ENCODE measurements at regions of chr7 and their contacts with region 1.

Region 1: GRCh38 chr7:112449902-112450806 is at the start of gene IFRD1:
- DNase-seq: peak; percentile 99
- H3K4me3 Mint-ChIP-seq: peak within 1 kb of the TSS; percentile 97
- H3K27ac Mint-ChIP-seq: peak within 1 kb of the TSS; percentile 97
- H3K4me1 Mint-ChIP-seq: peaks cover 26% of the 10 kb centered on the region
- H3K27me3 Mint-ChIP-seq: no peaks in the 10 kb centered on the region
- CTCF ChIP-seq: no peak
- total RNA-seq, gene IFRD1: 116 and 123 TPM in 2 replicates

Region 2: DNA sequence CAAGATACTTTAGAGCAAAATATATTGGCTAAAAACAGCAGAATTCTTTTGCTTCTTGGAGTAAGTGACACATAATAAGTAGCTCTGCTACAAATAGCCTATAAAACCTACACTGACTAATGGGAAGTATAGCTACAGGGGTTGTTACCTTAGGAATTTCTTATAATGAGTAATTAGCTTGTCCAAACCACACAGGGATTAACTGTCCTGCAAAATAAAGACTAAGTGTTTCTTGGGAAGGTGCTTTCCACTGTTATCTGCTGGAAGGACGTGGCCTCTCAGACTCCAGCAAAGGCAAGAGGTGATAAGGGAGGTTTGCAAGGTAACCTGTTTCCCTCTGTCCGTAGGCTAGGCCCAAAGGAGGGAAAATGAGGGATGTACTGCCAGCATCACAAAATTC is 546.4 kb before region 1 on chr7:
- CTCF ChIA-PET with region 1: no interaction called
- POLR2A ChIA-PET with region 1: interaction called, 18 read pairs
- intact Hi-C with region 1: no loop called
- DNase-seq: peak; percentile 56
- H3K4me3 Mint-ChIP-seq: no peak overlapping the region
- H3K27ac Mint-ChIP-seq: peak overlapping the region; percentile 49
- H3K4me1 Mint-ChIP-seq: peaks cover 20% of the 10 kb centered on the region
- H3K27me3 Mint-ChIP-seq: no peaks in the 10 kb centered on the region
- CTCF ChIP-seq: no peak

Region 3: GRCh38 chr7:112422842-112423496 is 27.2 kb before region 1 on chr7:
- CTCF ChIA-PET with region 1: interaction called, 15 read pairs
- POLR2A ChIA-PET with region 1: interaction called, 255 read pairs
- intact Hi-C with region 1: loop called (anchors 2 kb)
- DNase-seq: peak; percentile 97
- H3K4me3 Mint-ChIP-seq: no peak overlapping the region
- H3K27ac Mint-ChIP-seq: peak overlapping the region; percentile 75
- H3K4me1 Mint-ChIP-seq: peaks cover 40% of the 10 kb centered on the region
- H3K27me3 Mint-ChIP-seq: no peaks in the 10 kb centered on the region
- CTCF ChIP-seq: no peak

Region 4: DNA sequence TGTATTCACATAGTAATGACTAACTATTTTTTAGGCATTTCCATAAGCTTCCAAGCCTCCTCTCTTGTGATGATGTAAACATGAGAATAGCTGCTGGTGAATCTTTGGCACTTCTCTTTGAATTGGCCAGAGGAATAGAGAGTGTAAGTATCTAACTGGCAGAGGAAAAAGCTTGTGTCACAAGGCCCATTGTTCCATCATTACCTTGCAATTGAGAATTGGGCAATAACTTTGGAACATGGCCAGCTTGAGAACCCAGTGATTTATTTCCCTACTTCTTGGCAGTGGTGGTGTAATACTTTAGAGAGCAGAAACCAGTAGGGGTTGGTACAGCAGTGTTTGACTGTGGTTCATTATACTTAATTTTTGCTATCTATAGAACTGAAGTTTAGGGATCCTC is 12.1 kb after region 1 on chr7:
- CTCF ChIA-PET with region 1: interaction called, 54 read pairs
- POLR2A ChIA-PET with region 1: interaction called, 152 read pairs
- intact Hi-C with region 1: no loop called
- DNase-seq: peak; percentile 98
- H3K4me3 Mint-ChIP-seq: no peak overlapping the region
- H3K27ac Mint-ChIP-seq: peak overlapping the region; percentile 54
- H3K4me1 Mint-ChIP-seq: peaks cover 25% of the 10 kb centered on the region
- H3K27me3 Mint-ChIP-seq: no peaks in the 10 kb centered on the region
- CTCF ChIP-seq: no peak

Region 5: GRCh38 chr7:112495810-112496462 is 45.8 kb after region 1 on chr7:
- CTCF ChIA-PET with region 1: interaction called, 11 read pairs
- POLR2A ChIA-PET with region 1: interaction called, 5 read pairs
- intact Hi-C with region 1: no loop called
- DNase-seq: peak; percentile 77
- H3K4me3 Mint-ChIP-seq: no peak overlapping the region
- H3K27ac Mint-ChIP-seq: no peak overlapping the region
- H3K4me1 Mint-ChIP-seq: peaks cover 8% of the 10 kb centered on the region
- H3K27me3 Mint-ChIP-seq: peaks cover 24% of the 10 kb centered on the region
- CTCF ChIP-seq: peak; percentile 47

Region 6: GRCh38 chr7:112692333-112692732 is 242.2 kb after region 1 on chr7:
- CTCF ChIA-PET with region 1: no interaction called
- POLR2A ChIA-PET with region 1: no interaction called
- intact Hi-C with region 1: no loop called
- DNase-seq: no peak
- H3K4me3 Mint-ChIP-seq: no peak overlapping the region
- H3K27ac Mint-ChIP-seq: no peak overlapping the region
- H3K4me1 Mint-ChIP-seq: no peaks in the 10 kb centered on the region
- H3K27me3 Mint-ChIP-seq: no peaks in the 10 kb centered on the region
- CTCF ChIP-seq: no peak

Measured in MCF 10A (cell line).